ENCODE measurements at regions of chr3 and their contacts with region 1.

Region 1: DNA sequence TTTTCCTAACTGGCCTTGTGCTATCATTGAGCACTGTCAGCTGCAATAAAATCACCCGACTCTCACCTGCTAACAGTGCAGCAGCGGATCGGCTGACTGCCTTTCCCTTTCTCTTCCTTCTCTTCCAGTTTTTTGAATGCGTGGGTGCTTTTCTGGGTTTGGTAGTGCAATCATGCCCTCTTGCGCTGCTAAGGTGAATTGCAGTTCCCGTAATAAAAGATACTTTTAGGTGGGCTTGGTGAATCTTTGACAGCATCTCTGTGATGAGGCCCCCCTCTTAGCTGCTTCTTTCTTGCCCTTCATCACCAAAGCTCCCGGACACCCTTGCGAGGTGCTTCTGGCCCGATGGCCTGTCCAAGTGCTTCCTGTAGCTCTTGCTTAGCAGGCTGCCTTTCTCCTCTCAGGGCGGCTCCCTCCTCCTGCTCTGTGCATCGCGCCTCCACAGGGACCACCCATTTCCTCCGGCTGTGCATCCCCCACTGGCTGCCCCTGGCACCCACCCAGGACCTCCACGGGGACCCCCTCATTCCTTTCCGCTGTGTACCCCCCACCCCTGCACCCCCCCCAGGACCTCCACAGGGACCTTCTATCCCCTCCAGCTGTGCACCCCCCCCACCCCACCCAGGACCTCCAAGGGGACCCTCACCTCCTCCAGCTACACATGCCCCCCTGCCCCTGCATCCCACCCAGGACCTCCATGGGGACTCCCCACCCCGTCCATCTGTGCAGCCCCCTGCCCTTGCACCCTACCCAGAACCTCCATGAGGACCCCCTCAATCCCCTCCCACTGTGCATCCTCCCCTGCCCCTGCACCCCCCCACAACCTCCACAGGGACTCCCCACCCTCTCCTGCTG is 50.8 kb upstream of the RPL32 start:
- DNase-seq: no peak
- H3K4me3 ChIP-seq: no peak overlapping the region
- H3K27me3 ChIP-seq: no peaks in the 10 kb centered on the region; the same call in 1 of the 2 replicates
- CTCF ChIP-seq: peak; percentile 87

Region 2: DNA sequence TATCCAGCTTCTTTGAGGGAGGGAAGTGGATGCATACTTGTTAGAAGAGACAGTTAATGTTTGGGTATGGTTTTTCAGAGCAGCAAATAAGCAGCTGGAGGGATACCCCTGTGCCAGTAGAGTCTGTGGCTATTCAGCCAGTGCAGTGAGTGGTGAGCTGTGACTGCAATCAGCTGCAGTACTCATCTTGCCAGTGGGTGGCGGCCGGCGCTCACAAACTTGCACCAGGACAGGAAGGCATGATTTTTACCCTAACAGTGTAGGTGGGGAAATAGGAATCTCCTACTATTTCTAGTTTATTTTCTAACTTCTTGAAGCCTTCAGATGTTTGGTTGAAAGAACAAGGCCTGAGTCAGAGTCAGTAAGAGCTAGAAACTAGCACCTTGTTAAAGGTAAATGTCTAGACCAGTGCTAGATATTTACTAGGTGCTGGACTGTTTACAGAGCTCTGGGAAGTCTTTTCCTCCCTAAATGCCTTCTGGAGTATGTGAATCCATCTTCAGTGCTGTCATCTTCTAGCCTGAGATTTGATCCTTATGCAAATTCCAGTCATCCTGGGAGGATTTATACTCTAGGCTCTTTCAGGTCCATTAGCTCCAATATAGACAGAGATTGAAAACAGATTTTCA is 757.1 kb before region 1 on chr3:
- CTCF ChIA-PET with region 1: interaction called, 10 read pairs
- POLR2A ChIA-PET with region 1: no interaction called
- DNase-seq: no peak
- H3K4me3 ChIP-seq: no peak overlapping the region
- H3K27me3 ChIP-seq: peaks cover 6% of the 10 kb centered on the region; the same call in 1 of the 2 replicates
- CTCF ChIP-seq: peak; percentile 94

Region 3: DNA sequence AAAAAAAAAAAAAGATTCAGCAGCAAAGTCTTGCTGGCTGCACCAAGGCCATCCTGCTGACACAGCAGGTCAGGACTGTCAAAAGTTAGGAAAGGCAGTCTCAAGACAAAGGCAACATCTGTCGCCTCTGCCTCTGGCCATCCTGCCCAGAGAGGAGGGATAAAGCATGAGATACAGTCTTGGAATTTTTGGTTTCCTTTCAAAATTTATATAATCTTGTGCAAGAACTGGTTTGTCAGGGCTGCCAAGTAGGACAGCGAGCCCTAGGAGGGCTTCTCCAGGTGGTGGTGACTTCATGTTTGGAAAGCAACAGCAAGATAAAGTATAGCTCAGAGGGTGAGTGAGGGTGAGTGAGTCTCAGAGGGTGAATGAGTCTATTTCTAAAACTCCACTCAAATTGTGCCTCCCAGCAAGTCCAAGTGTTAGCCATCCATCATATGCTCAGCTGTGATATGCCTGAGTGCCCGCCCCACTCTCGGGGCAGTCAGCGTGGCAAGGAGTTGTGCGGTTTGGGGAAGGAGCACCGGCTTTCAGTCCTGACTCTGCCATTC is 38.9 kb before region 1 on chr3:
- CTCF ChIA-PET with region 1: interaction called, 10 read pairs
- POLR2A ChIA-PET with region 1: no interaction called
- DNase-seq: peak; percentile 22
- H3K4me3 ChIP-seq: no peak overlapping the region
- H3K27me3 ChIP-seq: peaks cover 15% of the 10 kb centered on the region
- CTCF ChIP-seq: no peak

Region 4: DNA sequence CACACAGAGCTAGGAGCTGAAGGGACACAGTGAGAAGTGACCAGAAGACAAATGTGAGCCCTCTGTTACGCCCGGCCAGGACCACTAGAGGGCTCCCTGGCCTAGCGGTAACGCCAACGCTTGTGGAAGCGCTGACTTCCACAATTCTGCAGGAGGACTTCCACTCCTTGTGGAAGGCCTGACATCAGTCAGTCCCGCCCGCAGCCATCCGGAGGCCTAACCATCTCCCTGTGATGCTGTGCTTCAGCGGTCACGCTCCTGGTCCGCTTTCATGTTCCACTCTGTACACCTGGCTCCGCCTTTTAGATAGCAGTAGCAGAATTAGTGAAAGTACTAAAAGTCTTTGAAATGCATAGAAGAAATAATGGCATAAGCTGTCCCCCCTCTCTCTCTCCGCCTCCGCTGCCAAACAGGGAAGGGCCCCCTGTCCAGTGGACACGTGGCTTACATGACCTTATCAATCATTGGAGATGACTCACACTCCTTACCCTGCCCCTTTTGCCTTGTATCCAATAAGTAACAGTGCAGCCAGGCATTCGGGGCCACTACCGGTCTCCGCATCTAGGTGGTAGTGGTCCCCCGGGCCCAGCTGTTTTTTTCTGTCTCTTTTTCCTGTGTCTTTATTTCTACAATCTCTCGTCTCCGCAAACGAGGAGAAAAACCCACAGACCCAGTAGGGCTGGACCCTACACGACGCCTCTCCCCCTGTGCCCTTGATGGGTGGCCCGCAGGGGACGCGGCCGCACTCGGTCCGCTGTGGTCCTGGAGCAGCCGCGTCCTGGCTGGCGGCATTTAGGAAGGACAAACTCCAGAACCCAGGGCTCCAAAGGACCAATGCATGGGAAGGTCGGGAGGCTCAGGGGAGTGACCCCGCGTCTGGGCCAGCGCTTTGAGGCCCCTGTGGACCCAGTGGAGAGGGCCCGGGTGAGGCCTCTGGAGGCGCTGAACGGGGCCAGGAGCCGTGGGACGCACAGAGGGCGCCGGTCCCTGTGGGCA is 23.9 kb before region 1 on chr3:
- CTCF ChIA-PET with region 1: interaction called, 58 read pairs
- POLR2A ChIA-PET with region 1: no interaction called
- DNase-seq: no peak
- H3K4me3 ChIP-seq: no peak overlapping the region
- H3K27me3 ChIP-seq: peaks cover 2% of the 10 kb centered on the region; the same call in 1 of the 2 replicates
- CTCF ChIP-seq: peak; percentile 92

Region 5: GRCh38 chr3:12907729-12908128 is 15.5 kb after region 1 on chr3:
- CTCF ChIA-PET with region 1: interaction called, 12 read pairs
- POLR2A ChIA-PET with region 1: no interaction called
- DNase-seq: no peak
- H3K4me3 ChIP-seq: no peak overlapping the region
- H3K27me3 ChIP-seq: no peaks in the 10 kb centered on the region
- CTCF ChIP-seq: no peak

Region 6: DNA sequence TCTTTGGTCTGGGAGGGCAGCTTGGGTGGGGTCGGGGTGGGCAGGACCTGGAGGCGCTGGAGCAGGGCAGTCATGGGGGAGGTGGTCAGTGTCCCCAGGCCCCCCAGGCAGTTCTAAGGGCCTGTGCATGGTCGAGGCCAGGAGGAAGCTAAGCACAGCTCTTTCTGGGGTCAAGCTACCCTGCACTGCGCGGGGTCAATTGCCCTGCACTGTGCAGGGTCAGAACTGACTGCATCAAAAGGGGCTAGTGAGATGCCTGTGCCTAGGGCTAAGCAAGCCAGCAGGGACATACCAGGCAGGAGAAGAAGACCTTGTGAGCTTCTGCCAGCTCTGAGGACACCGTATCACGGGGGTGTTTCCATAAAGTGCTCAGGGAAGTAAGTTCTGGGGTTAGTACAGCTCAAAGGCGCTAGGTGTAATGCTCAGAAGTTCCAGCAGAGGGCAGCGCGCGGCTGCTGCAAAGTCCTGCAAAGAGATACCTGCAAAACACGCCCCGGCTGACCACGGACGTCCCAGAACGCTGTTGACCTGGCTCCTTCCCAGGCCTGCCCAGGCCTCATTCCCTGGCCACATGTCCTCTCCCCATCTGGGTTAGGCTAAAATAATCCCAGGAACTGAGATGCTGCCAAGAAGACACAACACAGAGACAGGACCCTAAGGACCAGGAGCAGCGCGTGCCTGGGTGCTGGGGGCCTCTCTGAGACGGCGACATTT is 199.8 kb after region 1 on chr3:
- CTCF ChIA-PET with region 1: no interaction called
- POLR2A ChIA-PET with region 1: no interaction called
- DNase-seq: peak; percentile 8
- H3K4me3 ChIP-seq: no peak overlapping the region
- H3K27me3 ChIP-seq: peaks cover 4% of the 10 kb centered on the region; the same call in 1 of the 2 replicates
- CTCF ChIP-seq: peak; percentile 96

Measured in BJ (cell line).